Gastrocnemius medialis (tissue), 4 donors: ENCODE measurements at regions of chr2 and their contacts with region 1.

Region 1: GRCh38 chr2:235493775-235494715 is at the start of gene AGAP1:
- DNase-seq: peak; percentile 76 to 86
- ATAC-seq: peak; percentile 85 to 91
- H3K4me3 ChIP-seq: peak within 1 kb of the TSS; percentile 64 to 76 (median 70)
- H3K27ac ChIP-seq: peak within 1 kb of the TSS; percentile 73 to 86 (median 78)
- H3K4me1 ChIP-seq: peaks cover 11 to 30% of the 10 kb centered on the region in 2 donors
- H3K27me3 ChIP-seq: no peaks in the 10 kb centered on the region
- CTCF ChIP-seq: no peak
- POLR2A ChIP-seq: peak; percentile 36 to 37
- total RNA-seq, gene AGAP1: 8.5 to 26.8 (median 14.4) TPM

Region 2: DNA sequence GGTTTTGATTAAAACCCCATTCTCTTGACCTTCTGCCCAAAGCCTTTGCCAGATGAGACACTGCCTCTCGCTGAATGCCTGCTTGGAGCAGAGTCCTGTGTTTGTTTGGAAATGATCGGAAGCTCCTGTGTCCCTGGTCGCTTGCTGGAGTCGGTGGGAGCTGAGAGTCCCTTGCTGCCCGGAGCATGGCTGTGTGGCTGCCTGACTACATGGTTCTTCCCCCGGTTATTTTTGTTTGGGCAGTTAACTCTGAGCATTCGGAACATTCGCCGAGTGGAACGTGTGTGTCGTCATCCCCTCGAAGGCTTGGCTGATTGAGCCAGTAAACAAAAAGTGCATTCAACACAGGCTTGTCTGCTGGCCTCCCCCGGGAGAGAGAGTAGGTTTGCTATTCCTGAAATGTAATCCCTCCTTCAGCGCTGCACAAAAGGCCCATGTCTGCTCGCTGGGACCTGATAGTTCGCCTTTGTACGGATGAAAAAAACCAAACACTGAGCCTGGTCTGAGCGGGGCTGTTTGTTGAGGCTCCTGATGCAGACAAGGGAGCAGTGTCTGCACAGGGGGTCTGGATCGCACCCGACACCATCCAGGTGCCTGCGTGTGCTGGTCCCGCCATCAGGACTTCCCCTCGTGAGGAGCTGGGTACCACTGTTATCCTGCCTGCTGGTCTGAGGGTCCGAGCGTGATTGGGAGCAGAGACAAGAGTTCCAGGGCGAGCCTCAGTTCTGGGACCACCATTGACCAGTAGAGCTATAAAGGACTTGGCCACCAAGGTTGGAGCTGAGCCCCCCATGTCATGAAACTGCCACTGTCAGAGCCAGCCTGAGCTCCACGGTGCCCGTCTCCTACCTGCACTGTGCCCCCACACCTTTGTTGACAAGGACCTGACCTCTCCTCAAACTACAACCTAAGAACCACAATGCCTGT is 83.6 kb after region 1 on chr2:
- in situ Hi-C with region 1: no loop called
- intact Hi-C with region 1: loop called (anchors 5 kb)
- DNase-seq: peak; percentile 24 to 26
- ATAC-seq: peak; percentile 84 to 91
- H3K4me3 ChIP-seq: peak overlapping the region; percentile 5 to 51 (median 26)
- H3K27ac ChIP-seq: peak overlapping the region in 3 of 4 donors; percentile 24 to 57 (median 53)
- H3K4me1 ChIP-seq: peaks cover 18 to 25% of the 10 kb centered on the region in 2 donors
- H3K27me3 ChIP-seq: no peaks in the 10 kb centered on the region
- CTCF ChIP-seq: no peak
- POLR2A ChIP-seq: no peak

Region 3: DNA sequence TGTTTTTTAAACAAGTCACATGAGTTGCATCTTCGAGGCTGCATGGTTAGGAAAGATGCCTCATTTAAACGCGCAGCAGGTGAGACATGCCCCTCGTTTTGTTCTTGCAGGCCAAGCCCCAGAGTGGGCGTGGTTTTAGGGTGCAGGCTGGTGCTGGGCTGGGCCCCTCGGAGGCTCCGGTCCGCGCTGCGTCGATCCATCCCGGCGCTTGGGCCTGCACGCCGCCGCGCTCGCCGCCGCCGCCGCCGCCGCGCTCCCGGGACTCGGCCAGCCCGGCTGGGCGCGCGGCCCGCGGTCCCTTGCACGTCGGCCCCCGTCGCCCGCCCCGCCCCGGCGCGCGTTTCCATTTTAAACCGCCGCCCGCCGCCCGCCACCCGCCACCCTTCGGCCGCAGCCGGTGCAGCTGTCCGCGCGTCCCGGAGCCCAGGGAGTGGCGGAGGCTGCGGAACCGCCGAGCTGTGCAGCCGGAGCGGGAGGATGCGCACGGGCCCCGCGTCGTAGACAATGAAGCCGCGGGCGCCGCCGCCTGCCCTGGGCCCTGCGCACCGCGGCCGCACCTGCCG is 175.3 kb after region 1 on chr2:
- in situ Hi-C with region 1: no loop called
- intact Hi-C with region 1: loop called (anchors 5 kb)
- DNase-seq: peak; percentile 33 to 58
- ATAC-seq: peak; percentile 64 to 66
- H3K4me3 ChIP-seq: peak overlapping the region; percentile 38 to 49 (median 46)
- H3K27ac ChIP-seq: no peak overlapping the region
- H3K4me1 ChIP-seq: peaks cover 14 to 22% of the 10 kb centered on the region in 2 donors
- H3K27me3 ChIP-seq: no peaks in the 10 kb centered on the region
- CTCF ChIP-seq: peak in 1 of 5 experiments; percentile 26
- POLR2A ChIP-seq: no peak

Region 4: DNA sequence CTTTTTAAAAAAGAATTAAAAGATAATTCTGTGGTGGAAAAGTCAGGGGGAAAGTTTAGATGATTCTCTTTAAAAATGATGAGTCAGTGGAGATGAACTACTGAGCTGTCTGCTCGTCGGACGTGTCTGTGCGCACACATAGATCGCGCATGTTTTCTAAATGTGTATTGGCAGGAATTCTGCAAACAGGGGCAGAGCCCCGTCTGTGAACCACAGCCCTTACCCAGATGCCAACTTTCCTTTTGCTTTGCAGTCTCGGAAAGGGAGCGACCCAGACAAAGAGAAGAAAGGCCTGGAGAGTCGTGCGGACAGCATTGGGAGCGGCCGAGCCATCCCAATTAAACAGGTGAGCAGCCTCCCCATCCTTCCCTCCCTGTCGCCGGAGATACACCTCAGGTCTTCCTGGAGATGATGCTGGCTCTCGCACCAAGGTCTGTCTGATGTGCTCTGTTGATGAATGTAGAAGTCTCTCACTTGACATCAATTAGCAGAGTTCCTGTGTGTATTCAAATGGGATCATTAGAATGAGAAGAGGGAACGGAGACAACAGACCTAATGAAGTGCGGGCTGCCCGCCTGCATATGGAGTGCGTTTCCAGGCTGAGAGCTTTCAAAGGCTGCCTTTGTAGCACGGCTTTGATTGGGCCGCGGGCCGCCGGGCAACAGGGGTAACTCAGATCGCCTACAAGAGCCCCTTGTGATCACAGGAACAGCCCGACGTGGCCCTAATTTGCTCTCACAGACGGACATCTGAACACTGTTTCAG is 313.1 kb after region 1 on chr2:
- in situ Hi-C with region 1: no loop called
- intact Hi-C with region 1: no loop called
- DNase-seq: no peak
- ATAC-seq: no peak
- H3K4me3 ChIP-seq: no peak overlapping the region
- H3K27ac ChIP-seq: no peak overlapping the region
- H3K4me1 ChIP-seq: no peaks in the 10 kb centered on the region
- H3K27me3 ChIP-seq: no peaks in the 10 kb centered on the region
- CTCF ChIP-seq: no peak
- POLR2A ChIP-seq: no peak